ENCODE measurements at regions of chr11 and their contacts with region 1.

Region 1: DNA sequence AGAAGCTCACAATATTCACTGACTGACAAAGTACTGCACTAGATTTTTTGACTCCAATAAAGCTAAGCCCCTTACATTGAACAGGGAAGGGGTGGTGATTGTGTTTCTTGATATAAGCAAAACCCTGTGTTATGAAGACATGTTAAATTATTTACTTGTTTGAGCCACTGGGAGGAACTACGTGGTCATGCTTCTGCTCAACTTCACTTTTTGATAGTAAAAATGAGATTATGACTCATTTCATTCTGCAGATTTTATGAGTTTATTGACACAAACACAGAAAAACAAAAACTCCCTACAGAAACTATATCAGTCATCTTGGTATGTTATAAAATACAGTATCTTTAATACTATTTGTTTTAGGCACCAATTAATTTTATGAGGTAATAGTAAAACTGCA is 124.7 kb downstream of the CADM1 start:
- DNase-seq: no peak
- H3K4me3 ChIP-seq: no peak overlapping the region
- H3K27ac ChIP-seq: no peak overlapping the region
- H3K4me1 ChIP-seq: no peaks in the 10 kb centered on the region
- H3K27me3 ChIP-seq: no peaks in the 10 kb centered on the region
- CTCF ChIP-seq: no peak

Region 2: GRCh38 chr11:115180272-115180671 is 199.3 kb before region 1 on chr11:
- CTCF ChIA-PET with region 1: no interaction called
- POLR2A ChIA-PET with region 1: no interaction called
- intact Hi-C with region 1: no loop called
- DNase-seq: no peak
- H3K4me3 ChIP-seq: no peak overlapping the region
- H3K27ac ChIP-seq: no peak overlapping the region
- H3K4me1 ChIP-seq: no peaks in the 10 kb centered on the region
- H3K27me3 ChIP-seq: no peaks in the 10 kb centered on the region
- CTCF ChIP-seq: no peak

Region 3: GRCh38 chr11:115396533-115396932 is 17.0 kb after region 1 on chr11:
- CTCF ChIA-PET with region 1: no interaction called
- POLR2A ChIA-PET with region 1: no interaction called
- intact Hi-C with region 1: loop called (anchors 1 kb)
- DNase-seq: no peak
- H3K4me3 ChIP-seq: no peak overlapping the region
- H3K27ac ChIP-seq: no peak overlapping the region
- H3K4me1 ChIP-seq: no peaks in the 10 kb centered on the region
- H3K27me3 ChIP-seq: no peaks in the 10 kb centered on the region
- CTCF ChIP-seq: no peak